GM18951 (cell line): ENCODE measurements at regions of chr10 and their contacts with region 1.

Region 1: GRCh38 chr10:17730667-17731066 is 21.3 kb upstream of the TMEM236 start:
- POLR2A ChIP-seq: no peak

Region 2: GRCh38 chr10:17643755-17644484 is 86.7 kb before region 1 on chr10 and contains the start of gene STAM:
- in situ Hi-C with region 1: loop called (anchors 5 kb)
- POLR2A ChIP-seq: peak; percentile 77

Region 3: DNA sequence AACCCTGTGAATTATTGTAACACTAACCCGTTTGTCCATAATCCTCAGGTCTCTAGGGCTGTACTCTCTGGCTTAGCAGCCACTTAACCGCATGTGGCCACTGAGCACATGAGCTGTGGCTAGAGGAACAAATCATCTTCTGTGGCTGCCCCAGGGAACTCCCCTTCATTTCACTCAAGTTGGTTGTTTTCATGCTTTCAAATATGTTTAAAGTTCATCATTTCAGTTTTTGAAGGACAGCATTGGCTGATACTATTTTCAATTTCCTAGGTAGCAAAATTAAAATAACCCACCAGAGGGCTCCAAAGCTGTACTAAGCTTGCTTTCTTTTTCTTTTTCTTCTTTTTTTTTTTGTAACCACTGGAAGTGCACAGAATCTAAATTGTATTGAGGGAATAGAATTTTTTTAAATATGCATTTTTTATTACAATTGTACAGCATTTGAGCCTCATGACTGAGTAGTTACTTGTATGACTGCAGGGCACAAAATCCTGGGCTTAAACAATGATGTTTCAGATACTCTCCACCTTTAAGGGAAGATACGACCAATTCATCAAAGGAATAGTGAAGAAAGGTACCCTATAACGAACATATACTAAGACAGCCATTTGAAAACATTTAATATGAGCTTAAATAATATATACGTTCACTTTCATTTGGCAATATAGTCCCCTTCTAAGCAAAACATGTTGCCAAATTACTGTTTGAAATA is 117.1 kb after region 1 on chr10:
- in situ Hi-C with region 1: no loop called
- POLR2A ChIP-seq: no peak